Calu3 (cell line): ENCODE measurements at regions of chr2 and their contacts with region 1.

Region 1: DNA sequence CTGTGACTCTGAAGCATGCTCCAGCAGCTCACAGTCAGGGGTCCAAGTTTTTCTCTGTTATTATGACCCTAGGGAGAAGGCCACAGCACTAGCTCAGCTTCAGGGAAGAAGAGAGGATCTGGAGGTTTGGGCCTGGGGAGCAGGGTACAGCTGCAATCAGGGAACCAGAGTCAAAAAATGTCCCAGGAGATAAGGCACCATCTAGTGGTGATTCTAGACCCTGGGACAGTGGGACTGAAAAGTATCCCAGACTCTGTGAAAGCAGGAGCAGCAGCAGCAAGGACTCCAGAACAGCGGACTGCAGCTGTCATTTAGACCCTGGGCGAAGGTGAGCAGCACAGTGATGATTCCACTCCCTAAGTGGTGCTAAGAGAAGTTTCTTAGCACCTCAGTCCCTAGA is 278.4 kb upstream of the DDX18 start:
- DNase-seq: peak; percentile 37
- H3K4me3 Mint-ChIP-seq: no peak overlapping the region
- H3K27ac Mint-ChIP-seq: no peak overlapping the region
- H3K4me1 Mint-ChIP-seq: no peaks in the 10 kb centered on the region
- H3K27me3 Mint-ChIP-seq: no peaks in the 10 kb centered on the region
- CTCF ChIP-seq: peak; percentile 63

Region 2: DNA sequence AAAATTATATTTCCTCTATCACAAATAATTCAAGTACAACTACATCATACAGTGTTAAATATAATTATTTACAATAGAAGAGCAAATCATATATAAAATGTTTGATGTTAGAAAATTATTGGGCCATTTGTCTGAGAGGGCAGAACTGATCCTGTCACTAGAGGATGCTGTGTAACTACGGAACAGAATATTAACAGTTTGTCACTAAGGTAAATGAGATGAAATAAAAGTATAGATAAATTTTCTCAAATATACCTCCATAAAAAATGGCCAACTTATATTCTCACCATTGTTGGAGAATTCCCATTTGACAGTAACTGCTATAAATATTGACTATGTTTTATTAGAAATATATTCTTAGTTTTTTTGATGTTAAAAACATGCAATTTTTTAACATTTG is 789.0 kb before region 1 on chr2:
- CTCF ChIA-PET with region 1: no interaction called
- intact Hi-C with region 1: loop called (anchors 5 kb)
- DNase-seq: no peak
- H3K4me3 Mint-ChIP-seq: no peak overlapping the region
- H3K27ac Mint-ChIP-seq: no peak overlapping the region
- H3K4me1 Mint-ChIP-seq: no peaks in the 10 kb centered on the region
- H3K27me3 Mint-ChIP-seq: no peaks in the 10 kb centered on the region
- CTCF ChIP-seq: no peak

Region 3: GRCh38 chr2:117058366-117058765 is 477.8 kb before region 1 on chr2:
- CTCF ChIA-PET with region 1: no interaction called
- intact Hi-C with region 1: loop called (anchors 10 kb)
- DNase-seq: peak; percentile 7
- H3K4me3 Mint-ChIP-seq: no peak overlapping the region
- H3K27ac Mint-ChIP-seq: peak overlapping the region; percentile 34
- H3K4me1 Mint-ChIP-seq: peaks cover 26% of the 10 kb centered on the region
- H3K27me3 Mint-ChIP-seq: no peaks in the 10 kb centered on the region
- CTCF ChIP-seq: no peak

Region 4: DNA sequence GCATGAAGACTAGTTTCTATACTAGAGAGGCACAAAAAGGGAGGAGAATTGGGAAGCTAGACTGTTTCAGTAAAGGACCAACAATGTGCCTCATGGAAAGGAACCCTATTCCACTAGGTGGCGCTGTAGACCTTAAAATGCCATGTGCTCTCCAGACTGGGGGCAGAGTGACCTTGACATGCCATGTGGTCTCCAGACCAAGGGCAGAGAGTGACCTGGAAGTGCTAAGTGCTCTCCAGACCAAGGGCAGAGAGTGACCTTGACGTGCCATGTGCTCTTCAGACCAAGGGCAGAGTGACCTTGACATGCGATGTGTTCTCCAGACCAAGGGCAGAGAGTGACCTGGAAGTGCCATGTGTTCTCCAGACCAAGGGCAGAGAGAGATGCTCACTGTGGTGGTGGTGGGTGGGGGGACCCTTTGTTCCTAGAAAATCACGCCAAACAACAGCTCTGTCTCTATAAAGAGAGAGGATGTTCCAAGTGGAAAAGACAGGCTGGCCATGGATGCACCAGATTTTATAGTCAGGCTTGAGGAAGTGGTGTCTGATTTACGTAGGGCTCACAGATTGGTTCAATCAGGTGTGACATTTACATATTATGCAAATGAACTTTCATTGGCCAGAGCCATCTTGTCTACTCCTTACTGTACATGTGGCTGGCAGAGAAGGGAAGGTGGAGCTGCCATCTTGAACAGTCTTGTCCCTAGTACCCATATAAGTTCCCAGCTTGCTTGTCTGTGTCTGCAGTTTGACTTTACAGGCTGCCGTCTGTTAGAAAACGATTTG is 65.6 kb before region 1 on chr2:
- CTCF ChIA-PET with region 1: no interaction called
- intact Hi-C with region 1: loop called (anchors 5 kb)
- DNase-seq: peak; percentile 38
- H3K4me3 Mint-ChIP-seq: no peak overlapping the region
- H3K27ac Mint-ChIP-seq: no peak overlapping the region
- H3K4me1 Mint-ChIP-seq: no peaks in the 10 kb centered on the region
- H3K27me3 Mint-ChIP-seq: no peaks in the 10 kb centered on the region
- CTCF ChIP-seq: peak; percentile 59

Region 5: GRCh38 chr2:117771969-117772630 is 236.0 kb after region 1 on chr2:
- CTCF ChIA-PET with region 1: no interaction called
- intact Hi-C with region 1: loop called (anchors 10 kb)
- DNase-seq: no peak
- H3K4me3 Mint-ChIP-seq: no peak overlapping the region
- H3K27ac Mint-ChIP-seq: no peak overlapping the region
- H3K4me1 Mint-ChIP-seq: peaks cover 8% of the 10 kb centered on the region
- H3K27me3 Mint-ChIP-seq: peaks cover 13% of the 10 kb centered on the region
- CTCF ChIP-seq: peak; percentile 55